Sciatic nerve (tissue), 2 donors: ENCODE measurements at regions of chr16 and their contacts with region 1.

Region 1: DNA sequence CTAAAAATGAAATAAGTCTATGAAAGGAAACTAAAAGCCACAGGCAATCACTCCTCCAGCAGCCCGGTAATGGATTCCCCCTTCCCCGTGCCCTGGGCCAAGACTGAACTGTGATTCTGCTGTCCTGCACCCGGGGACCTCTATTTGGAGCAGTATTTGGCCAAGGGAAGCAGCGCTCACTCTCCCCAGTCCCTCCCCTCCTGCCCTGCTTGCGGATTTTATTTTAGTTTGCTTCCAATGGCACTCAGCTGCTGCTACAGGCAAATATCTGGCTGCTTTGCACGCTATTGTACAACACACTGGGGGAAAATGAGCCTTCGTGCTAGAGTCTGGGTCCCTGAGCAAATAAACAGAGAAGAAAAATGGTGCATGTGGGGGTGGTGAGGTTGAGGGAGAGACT is 975.7 kb upstream of the RBFOX1 start:
- DNase-seq: no peak
- ATAC-seq: peak; percentile 15

Region 2: DNA sequence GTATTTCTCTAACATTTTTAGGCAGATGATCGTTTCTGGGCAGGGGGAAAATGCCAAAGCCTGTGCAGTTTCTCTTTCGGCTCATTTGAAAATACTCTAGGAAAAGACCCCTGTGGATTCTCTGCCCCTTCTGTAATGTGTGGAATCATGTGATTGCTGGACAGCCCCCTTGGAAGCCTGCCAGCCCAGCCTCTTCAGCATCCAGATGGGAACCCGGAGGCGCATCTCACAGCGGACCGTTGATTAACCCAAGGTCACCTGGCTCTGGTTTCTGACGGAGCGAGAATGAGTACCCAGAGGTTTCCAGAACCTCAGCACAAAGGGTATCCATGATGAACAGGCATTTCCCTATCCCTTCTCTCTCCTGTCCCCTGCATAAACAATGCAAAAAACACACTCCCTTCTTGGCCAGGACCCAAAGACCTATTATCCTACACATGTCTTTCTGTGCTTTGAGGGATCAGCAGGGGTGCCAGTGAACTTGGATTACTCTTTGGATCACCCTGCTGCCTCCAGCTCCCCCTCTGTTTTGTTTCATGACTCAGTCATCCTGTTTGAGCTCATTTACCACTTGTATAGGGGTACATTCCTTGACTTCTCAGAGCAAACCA is 18.7 kb after region 1 on chr16:
- intact Hi-C with region 1: loop called (anchors 1 kb)
- DNase-seq: no peak
- ATAC-seq: no peak